Transverse colon (tissue), 4 donors: ENCODE measurements at regions of chr18 and their contacts with region 1.

Region 1: GRCh38 chr18:48410095-48410920 is 1.1 kb upstream of the ZBTB7C start:
- DNase-seq: peak; percentile 91
- H3K4me3 ChIP-seq: peak overlapping the region; percentile 67 to 83 (median 74)
- H3K27ac ChIP-seq: peak overlapping the region; percentile 56 to 76 (median 60)
- H3K4me1 ChIP-seq: peaks cover 5 to 19% (median 16%) of the 10 kb centered on the region in 4 donors
- H3K27me3 ChIP-seq: peaks cover 82% of the 10 kb centered on the region
- CTCF ChIP-seq: peak in 1 of 5 experiments; percentile 25
- EP300 ChIP-seq: no peak
- POLR2A ChIP-seq: no peak

Region 2: GRCh38 chr18:48161191-48161910 is 249.0 kb before region 1 on chr18:
- in situ Hi-C with region 1: no loop called
- intact Hi-C with region 1: loop called (anchors 10 kb)
- DNase-seq: peak; percentile 91
- H3K4me3 ChIP-seq: peak overlapping the region; percentile 28 to 60 (median 52)
- H3K27ac ChIP-seq: peak overlapping the region; percentile 88 to 93 (median 92)
- H3K4me1 ChIP-seq: peaks cover 15 to 45% (median 31%) of the 10 kb centered on the region in 4 donors
- H3K27me3 ChIP-seq: no peaks in the 10 kb centered on the region
- CTCF ChIP-seq: no peak
- EP300 ChIP-seq: no peak
- POLR2A ChIP-seq: peak; percentile 87